Endothelial cell of umbilical vein (primary cell): ENCODE measurements at regions of chr12 and their contacts with region 1.

Region 1: DNA sequence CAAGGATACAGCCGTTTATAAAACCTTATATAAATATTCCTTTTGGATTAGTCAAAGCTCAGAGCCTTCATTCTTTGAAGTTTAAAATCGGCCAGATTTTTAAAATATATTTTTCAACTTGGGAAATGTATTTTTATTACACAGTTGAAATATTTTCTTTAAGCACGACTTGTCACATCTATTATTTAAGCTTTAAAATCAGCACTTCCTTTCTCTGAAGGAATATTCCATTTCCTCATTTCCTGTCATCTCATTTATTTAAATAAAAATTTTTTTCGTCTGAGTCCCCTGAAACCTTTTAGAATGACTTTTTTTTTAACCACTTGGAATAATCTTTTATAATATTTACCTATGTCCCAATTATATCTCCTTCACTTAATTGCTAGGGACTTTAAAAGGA is 107.5 kb upstream of the PDE3A start:
- DNase-seq: peak; percentile 46
- H3K4me3 ChIP-seq: no peak overlapping the region
- H3K27ac ChIP-seq: no peak overlapping the region
- H3K4me1 ChIP-seq: no peaks in the 10 kb centered on the region
- H3K27me3 ChIP-seq: no peaks in the 10 kb centered on the region
- CTCF ChIP-seq: no peak
- POLR2A ChIP-seq: no peak

Region 2: DNA sequence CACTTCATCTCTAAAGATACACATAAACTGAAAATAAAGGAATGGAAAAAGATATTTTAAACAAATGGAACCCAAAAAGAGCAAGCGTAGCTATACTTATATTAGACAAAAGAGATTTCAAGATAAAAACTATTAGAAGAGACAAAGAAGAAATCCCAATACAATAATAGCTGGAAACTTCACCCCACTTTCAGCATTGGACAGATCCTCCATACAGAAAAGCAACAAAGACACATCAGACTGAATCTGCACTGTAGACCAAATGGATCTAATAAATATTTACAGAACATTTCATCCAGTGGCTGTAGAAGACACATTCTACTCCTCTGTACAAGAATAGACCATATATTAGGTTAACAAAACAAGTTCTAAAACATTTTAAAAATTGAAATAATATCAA is 10.1 kb before region 1 on chr12:
- CTCF ChIA-PET with region 1: interaction called, 10 read pairs
- POLR2A ChIA-PET with region 1: no interaction called
- dilution Hi-C with region 1: no loop called
- intact Hi-C with region 1: no loop called
- DNase-seq: no peak
- H3K4me3 ChIP-seq: no peak overlapping the region
- H3K27ac ChIP-seq: no peak overlapping the region
- H3K4me1 ChIP-seq: no peaks in the 10 kb centered on the region
- H3K27me3 ChIP-seq: no peaks in the 10 kb centered on the region
- CTCF ChIP-seq: no peak
- POLR2A ChIP-seq: no peak